Endothelial cell of umbilical vein (primary cell): ENCODE measurements at regions of chr6 and their contacts with region 1.

Region 1: GRCh38 chr6:84652356-84653026 is 111.9 kb downstream of the TBX18 start:
- DNase-seq: peak; percentile 96
- H3K4me3 ChIP-seq: peak overlapping the region in 1 of 3 experiments; percentile 13
- H3K27ac ChIP-seq: peak overlapping the region; percentile 97
- H3K4me1 ChIP-seq: peaks cover 36% of the 10 kb centered on the region
- H3K27me3 ChIP-seq: no peaks in the 10 kb centered on the region
- CTCF ChIP-seq: no peak
- POLR2A ChIP-seq: peak; percentile 56

Region 2: GRCh38 chr6:84492241-84493165 is 160.0 kb before region 1 on chr6:
- CTCF ChIA-PET with region 1: no interaction called
- POLR2A ChIA-PET with region 1: no interaction called
- dilution Hi-C with region 1: no loop called
- intact Hi-C with region 1: loop called (anchors 2 kb)
- DNase-seq: peak; percentile 91
- H3K4me3 ChIP-seq: no peak overlapping the region
- H3K27ac ChIP-seq: peak overlapping the region; percentile 87
- H3K4me1 ChIP-seq: peaks cover 28% of the 10 kb centered on the region
- H3K27me3 ChIP-seq: no peaks in the 10 kb centered on the region
- CTCF ChIP-seq: no peak
- POLR2A ChIP-seq: peak; percentile 50

Region 3: GRCh38 chr6:84581494-84582259 is 70.8 kb before region 1 on chr6:
- CTCF ChIA-PET with region 1: no interaction called
- POLR2A ChIA-PET with region 1: no interaction called
- dilution Hi-C with region 1: no loop called
- intact Hi-C with region 1: loop called (anchors 2 kb)
- DNase-seq: no peak
- H3K4me3 ChIP-seq: no peak overlapping the region
- H3K27ac ChIP-seq: no peak overlapping the region
- H3K4me1 ChIP-seq: peaks cover 15% of the 10 kb centered on the region
- H3K27me3 ChIP-seq: no peaks in the 10 kb centered on the region
- CTCF ChIP-seq: no peak
- POLR2A ChIP-seq: no peak

Region 4: GRCh38 chr6:84601366-84601765 is 51.1 kb before region 1 on chr6:
- CTCF ChIA-PET with region 1: no interaction called
- POLR2A ChIA-PET with region 1: no interaction called
- dilution Hi-C with region 1: no loop called
- intact Hi-C with region 1: loop called (anchors 5 kb)
- DNase-seq: peak; percentile 48
- H3K4me3 ChIP-seq: no peak overlapping the region
- H3K27ac ChIP-seq: peak overlapping the region; percentile 52
- H3K4me1 ChIP-seq: peaks cover 10% of the 10 kb centered on the region
- H3K27me3 ChIP-seq: no peaks in the 10 kb centered on the region
- CTCF ChIP-seq: no peak
- POLR2A ChIP-seq: no peak

Region 5: GRCh38 chr6:84667252-84668213 is 15.0 kb after region 1 on chr6:
- CTCF ChIA-PET with region 1: no interaction called
- POLR2A ChIA-PET with region 1: no interaction called
- dilution Hi-C with region 1: no loop called
- intact Hi-C with region 1: loop called (anchors 1 kb)
- DNase-seq: peak; percentile 88
- H3K4me3 ChIP-seq: no peak overlapping the region
- H3K27ac ChIP-seq: peak overlapping the region; percentile 89
- H3K4me1 ChIP-seq: peaks cover 17% of the 10 kb centered on the region
- H3K27me3 ChIP-seq: no peaks in the 10 kb centered on the region
- CTCF ChIP-seq: no peak
- POLR2A ChIP-seq: no peak